Calu3 (cell line): ENCODE measurements at regions of chr18 and their contacts with region 1.

Region 1: GRCh38 chr18:13290856-13291271 is 72.3 kb downstream of the LDLRAD4 start:
- DNase-seq: no peak
- H3K4me3 Mint-ChIP-seq: no peak overlapping the region
- H3K27ac Mint-ChIP-seq: no peak overlapping the region
- H3K4me1 Mint-ChIP-seq: no peaks in the 10 kb centered on the region
- H3K27me3 Mint-ChIP-seq: peaks cover 68% of the 10 kb centered on the region
- CTCF ChIP-seq: no peak

Region 2: DNA sequence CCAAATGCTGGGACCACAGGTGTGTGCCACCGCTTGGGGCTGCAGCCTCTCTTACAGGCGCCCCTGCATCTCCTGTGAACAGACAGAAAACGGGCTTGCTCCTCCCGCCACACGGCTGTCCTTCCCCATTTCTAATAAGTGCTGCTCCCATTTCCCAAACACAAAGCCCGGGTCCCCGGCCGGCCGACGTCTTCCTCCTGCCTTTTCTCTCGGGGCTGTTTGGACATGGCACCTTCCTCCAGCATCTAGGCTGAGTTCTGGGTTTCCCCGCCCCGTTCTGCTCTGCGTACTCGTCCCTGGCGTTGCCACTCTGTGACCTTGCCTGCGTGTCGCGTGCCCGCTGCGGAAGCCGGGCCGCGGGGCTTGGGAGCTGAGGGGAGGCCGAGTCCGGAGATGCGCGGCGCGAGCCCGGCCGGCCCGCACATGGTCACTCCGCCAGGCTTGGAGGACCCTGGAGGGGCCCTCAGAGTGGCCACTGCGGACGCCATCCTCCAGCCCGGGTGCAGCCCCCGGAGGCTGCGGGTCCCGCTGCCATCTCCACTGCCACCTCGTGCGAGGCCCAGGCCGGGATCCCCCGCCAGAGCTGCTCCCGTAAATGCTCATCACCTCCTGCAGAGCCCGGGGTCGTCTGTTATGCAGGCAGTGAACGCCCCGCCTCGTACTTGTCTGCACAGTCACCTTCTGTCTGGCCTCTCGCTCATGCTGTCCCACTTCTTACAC is 856.9 kb before region 1 on chr18:
- CTCF ChIA-PET with region 1: no interaction called
- intact Hi-C with region 1: no loop called
- DNase-seq: no peak
- H3K4me3 Mint-ChIP-seq: no peak overlapping the region
- H3K27ac Mint-ChIP-seq: no peak overlapping the region
- H3K4me1 Mint-ChIP-seq: no peaks in the 10 kb centered on the region
- H3K27me3 Mint-ChIP-seq: no peaks in the 10 kb centered on the region
- CTCF ChIP-seq: no peak

Region 3: DNA sequence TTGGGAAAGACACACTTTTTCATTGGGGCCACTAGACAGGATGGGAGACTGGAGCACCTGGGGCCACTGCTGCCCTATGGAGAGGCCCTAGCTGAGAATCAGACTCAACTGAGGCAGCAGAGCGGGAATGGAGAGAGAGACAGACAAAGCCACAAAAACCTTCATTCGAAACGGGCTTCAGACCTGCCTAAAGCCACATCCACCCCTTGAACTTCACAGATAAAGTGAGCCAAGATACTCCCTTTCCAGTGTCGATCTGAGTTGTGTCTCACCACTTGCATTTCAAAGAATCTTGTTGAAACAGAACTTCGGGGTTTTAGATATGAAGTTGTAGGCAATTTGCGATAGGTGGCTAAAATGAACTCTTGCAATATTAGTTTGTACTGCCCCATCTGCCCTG is 83.6 kb before region 1 on chr18:
- CTCF ChIA-PET with region 1: no interaction called
- intact Hi-C with region 1: no loop called
- DNase-seq: no peak
- H3K4me3 Mint-ChIP-seq: no peak overlapping the region
- H3K27ac Mint-ChIP-seq: no peak overlapping the region
- H3K4me1 Mint-ChIP-seq: no peaks in the 10 kb centered on the region
- H3K27me3 Mint-ChIP-seq: peaks cover 82% of the 10 kb centered on the region
- CTCF ChIP-seq: no peak

Region 4: DNA sequence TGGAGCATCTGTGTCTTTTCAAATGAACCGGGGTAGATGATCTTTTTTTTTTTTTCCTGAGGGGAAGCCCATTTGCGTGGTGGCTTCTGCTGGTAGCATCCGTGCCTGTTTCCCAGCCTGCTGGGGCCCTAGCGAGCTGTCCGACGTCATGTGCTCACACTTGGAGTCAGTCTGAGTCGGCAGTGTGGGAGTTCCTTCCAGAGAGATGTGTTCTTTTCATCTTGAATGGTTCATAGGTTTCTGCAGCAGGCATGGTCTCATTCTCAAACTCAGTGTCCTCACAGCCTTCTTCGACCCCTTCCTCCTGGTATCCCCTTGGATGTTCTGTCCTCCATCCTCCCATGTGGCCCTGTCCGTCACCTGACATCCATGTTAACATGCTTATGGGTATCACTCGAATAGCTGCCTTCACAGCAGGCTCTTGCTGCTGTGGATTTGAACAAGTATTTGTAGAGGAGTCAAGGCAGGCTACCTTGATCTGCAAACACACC is 21.3 kb before region 1 on chr18:
- CTCF ChIA-PET with region 1: no interaction called
- intact Hi-C with region 1: loop called (anchors 1 kb)
- DNase-seq: no peak
- H3K4me3 Mint-ChIP-seq: no peak overlapping the region
- H3K27ac Mint-ChIP-seq: no peak overlapping the region
- H3K4me1 Mint-ChIP-seq: peaks cover 8% of the 10 kb centered on the region
- H3K27me3 Mint-ChIP-seq: peaks cover 74% of the 10 kb centered on the region
- CTCF ChIP-seq: no peak

Region 5: GRCh38 chr18:13336841-13337240 is 46.0 kb after region 1 on chr18:
- CTCF ChIA-PET with region 1: no interaction called
- intact Hi-C with region 1: loop called (anchors 2 kb)
- DNase-seq: no peak
- H3K4me3 Mint-ChIP-seq: no peak overlapping the region
- H3K27ac Mint-ChIP-seq: no peak overlapping the region
- H3K4me1 Mint-ChIP-seq: no peaks in the 10 kb centered on the region
- H3K27me3 Mint-ChIP-seq: peaks cover 36% of the 10 kb centered on the region
- CTCF ChIP-seq: no peak